ENCODE measurements at regions of chr6 and their contacts with region 1.

Region 1: DNA sequence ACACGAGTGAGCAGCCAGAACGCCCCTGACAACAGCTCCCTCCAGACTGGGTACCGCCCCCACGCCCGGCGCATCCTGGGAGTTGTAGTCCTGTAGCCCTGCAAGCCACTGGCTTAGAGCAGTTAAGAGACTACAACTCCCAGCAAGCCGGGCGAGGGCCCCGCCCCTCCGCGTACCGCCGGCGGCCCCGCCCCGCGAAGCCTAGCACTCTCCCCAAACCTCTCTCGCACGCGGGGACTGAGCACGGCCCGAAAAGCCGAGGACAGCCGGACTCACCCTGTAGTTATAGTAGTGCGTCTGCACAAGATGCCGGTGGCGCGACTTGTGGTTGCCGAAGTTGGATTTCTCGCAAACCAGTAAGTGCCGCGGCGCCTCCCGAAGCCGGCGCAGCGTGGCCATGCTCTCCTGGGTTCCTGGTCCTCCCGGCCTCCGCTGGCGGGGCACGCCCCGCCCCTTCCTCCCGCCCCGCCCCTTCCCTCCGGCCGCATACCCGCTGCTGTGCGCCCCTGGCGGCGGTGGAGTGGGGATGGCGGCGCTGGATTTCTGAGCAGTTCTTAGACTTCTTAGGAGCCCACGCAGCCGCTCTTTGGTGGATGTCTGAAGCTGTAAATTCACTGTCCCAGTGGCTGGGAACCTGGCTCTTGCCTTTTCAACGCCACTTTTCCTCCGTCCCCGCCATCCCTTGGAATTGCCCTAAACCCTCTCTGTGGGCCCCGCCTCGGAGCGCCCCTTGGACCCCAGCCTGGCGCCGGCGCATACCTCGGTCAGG is at the start of gene RPP40:
- DNase-seq: peak; percentile 72
- H3K4me3 ChIP-seq: peak within 1 kb of the TSS; percentile 92
- H3K27me3 ChIP-seq: no peaks in the 10 kb centered on the region
- CTCF ChIP-seq: peak; percentile 89
- polyA plus RNA-seq, gene RPP40: 5.6 and 8.7 TPM in 2 replicates

Region 2: DNA sequence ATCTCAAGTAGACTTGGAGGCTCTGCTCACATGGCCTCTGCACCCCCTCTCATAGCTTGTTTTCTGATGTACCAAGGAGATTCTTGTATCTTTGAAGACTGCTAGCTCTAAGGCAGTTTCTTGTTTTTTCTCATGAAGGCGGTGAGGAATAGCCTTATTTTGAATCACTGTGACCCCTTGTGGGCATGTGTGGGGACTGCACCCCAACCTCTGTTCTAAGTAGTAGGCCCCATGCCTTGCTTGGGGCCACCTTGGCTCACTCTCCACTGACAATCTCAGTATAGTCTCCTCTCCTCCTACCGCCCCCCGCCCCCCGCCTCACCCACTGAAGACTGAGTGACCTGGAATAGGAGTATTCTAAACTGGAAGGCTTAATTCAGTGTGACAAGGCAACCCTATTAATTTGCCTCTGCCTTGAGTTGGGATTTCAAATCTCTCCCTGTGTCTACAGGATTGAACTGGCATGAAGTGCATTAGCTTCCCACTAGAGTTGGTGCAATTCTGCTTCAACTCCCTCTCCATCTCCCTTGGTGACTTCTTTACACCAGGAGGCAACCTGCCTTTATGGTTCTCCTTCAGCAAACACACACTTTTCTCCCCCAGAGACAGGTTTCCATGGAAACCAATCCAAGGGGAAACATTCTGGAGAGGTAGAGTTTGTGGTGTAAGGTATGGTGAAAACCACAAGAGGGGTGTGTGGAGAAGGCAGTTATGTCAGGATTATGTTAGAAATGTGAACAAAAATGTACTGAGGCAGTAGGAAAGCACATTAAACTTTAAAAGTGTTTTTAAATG is 793.0 kb before region 1 on chr6:
- CTCF ChIA-PET with region 1: no interaction called
- POLR2A ChIA-PET with region 1: interaction called, 21 read pairs
- DNase-seq: no peak
- H3K4me3 ChIP-seq: no peak overlapping the region
- H3K27me3 ChIP-seq: peaks cover 2% of the 10 kb centered on the region; the same call in 1 of the 2 replicates
- CTCF ChIP-seq: peak; percentile 86

Region 3: DNA sequence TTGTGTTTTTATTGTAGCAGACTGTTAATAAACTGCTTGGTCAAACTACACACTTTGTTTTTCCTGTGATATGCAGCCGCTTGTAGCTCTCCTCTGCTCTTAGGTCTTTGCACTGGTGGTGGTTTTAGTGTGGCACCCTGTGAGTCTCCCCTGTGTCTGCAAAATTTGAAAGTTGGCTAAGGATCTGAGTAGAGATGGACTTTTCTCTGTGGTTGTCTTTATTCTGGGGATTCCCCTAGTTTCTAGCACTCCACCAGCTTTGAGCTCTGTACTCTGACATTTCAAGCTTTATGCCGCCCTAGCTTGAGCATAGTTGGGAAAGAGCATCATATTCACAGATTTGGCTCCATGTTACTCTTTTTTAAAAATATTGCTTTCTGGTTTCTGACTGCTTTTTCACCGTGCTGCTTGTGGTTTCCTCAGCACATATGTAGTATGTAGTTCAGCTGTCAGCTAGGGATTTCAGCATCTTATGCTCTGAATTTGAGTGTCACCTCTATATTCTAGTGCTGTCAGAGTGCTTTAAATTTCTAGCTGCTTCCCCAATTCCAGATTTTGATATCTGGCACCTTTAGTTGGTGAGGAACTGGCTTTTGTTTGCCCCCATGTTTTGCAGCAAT is 202.2 kb before region 1 on chr6:
- CTCF ChIA-PET with region 1: no interaction called
- POLR2A ChIA-PET with region 1: no interaction called
- DNase-seq: no peak
- H3K4me3 ChIP-seq: no peak overlapping the region
- H3K27me3 ChIP-seq: no peaks in the 10 kb centered on the region
- CTCF ChIP-seq: no peak

Region 4: GRCh38 chr6:5030596-5031136 is 26.9 kb after region 1 on chr6:
- CTCF ChIA-PET with region 1: interaction called, 10 read pairs
- POLR2A ChIA-PET with region 1: no interaction called
- DNase-seq: no peak
- H3K4me3 ChIP-seq: no peak overlapping the region
- H3K27me3 ChIP-seq: no peaks in the 10 kb centered on the region
- CTCF ChIP-seq: peak; percentile 74

Measured in BJ (cell line).